Vagina (tissue), 2 donors: ENCODE measurements at regions of chr20 and their contacts with region 1.

Region 1: DNA sequence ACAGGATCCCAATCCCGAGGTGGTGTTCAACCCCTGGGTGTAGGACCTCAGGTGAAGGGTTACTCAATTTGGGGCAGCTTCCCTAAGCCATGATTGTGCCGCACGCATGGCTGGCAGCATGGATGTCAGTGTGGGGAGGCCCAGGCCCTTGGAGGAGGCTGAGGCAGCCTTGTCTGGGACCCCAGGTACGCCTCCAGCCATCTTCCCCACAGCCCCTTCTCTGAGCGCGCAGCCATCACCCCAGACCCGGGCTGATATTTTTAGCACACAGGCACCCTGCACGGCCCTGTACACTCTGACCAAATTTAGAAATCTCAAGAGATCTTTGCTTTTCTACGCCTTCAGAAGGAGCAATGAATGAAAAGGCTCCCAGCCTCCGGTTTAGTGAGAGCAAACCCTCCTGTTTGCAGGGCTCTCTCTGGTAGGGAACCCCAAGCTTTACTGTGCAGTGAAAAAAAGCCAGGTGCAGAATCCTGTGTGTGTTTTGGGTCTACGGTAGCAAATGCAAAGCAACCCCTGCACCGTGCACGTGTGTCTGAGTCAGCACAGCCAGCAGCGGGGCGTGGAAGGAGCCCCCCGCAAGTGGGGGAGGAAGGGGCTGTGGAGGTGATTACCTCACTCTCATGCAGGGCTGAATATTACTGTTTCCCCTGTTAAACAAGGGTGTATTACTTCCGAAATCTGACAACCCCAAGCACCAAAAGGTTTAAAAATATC is 44.3 kb downstream of the CTCFL start:
- DNase-seq: no peak
- H3K4me3 ChIP-seq: no peak overlapping the region
- H3K27ac ChIP-seq: peak overlapping the region; percentile 36
- H3K4me1 ChIP-seq: no peaks in the 10 kb centered on the region
- H3K27me3 ChIP-seq: no peaks in the 10 kb centered on the region
- CTCF ChIP-seq: no peak
- POLR2A ChIP-seq: no peak

Region 2: GRCh38 chr20:57223648-57224489 is 256.7 kb before region 1 on chr20:
- intact Hi-C with region 1: no loop called
- DNase-seq: no peak
- H3K4me3 ChIP-seq: no peak overlapping the region
- H3K27ac ChIP-seq: no peak overlapping the region
- H3K4me1 ChIP-seq: peaks cover 16% of the 10 kb centered on the region
- H3K27me3 ChIP-seq: no peaks in the 10 kb centered on the region
- CTCF ChIP-seq: no peak
- POLR2A ChIP-seq: no peak

Region 3: DNA sequence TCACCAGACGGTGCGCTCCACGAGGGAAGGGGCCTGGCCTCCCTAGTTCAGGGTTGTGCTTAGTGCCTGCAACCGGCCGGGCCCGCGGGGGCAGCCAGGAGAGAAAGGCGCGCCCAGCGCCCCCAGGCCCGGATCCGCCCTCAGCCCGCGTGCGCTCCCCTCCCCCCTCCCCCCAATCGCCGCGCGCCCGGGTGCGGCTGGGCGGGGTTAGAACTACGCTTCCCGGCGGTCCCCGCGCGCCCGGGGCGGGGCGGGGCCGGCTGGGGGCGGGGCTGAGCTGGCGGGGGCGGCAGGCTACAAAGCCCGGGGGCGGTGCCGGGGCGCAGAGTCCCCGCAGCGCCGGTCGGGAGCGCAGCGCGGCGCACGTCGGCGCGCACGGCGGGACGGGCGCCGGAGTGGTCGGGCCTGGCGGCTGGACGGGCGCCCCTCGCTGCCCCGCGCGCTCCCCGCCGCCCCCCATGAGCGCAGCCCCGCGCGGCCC is 89.5 kb before region 1 on chr20 and contains the start of gene RBM38:
- intact Hi-C with region 1: loop called (anchors 5 kb)
- DNase-seq: no peak
- H3K4me3 ChIP-seq: peak within 1 kb of the TSS; percentile 61 to 92
- H3K27ac ChIP-seq: peak within 1 kb of the TSS; percentile 68
- H3K4me1 ChIP-seq: peaks cover 55% of the 10 kb centered on the region
- H3K27me3 ChIP-seq: no peaks in the 10 kb centered on the region
- CTCF ChIP-seq: no peak
- POLR2A ChIP-seq: no peak
- total RNA-seq, gene RBM38: 24.8 TPM